Heart right ventricle (tissue), 16 donors: ENCODE measurements at regions of chr2 and their contacts with region 1.

Region 1: DNA sequence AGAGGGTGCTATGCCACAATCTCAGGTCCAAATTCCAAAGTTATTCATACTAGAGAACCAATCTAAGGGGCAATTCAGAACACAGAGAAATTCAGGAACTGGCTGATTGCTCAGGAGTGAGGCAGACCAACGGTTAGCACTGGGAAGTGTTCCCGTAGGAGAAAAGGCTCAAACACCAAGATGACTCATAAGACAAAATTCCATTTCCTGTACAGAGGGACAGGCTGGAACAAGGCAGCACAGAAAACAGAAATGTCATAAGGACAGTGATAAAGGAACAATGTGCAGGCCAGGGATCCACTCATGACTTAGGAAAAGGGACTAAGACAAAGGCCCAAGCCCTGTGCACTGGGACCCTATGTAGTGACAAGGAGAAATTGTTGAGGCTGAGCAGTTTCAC is 54.2 kb downstream of the PDE1A start:
- DNase-seq: peak in 1 of 2 donors; percentile 39
- ATAC-seq: peak; percentile 78 to 98 (median 91)
- H3K4me3 ChIP-seq: no peak overlapping the region
- H3K27ac ChIP-seq: peak overlapping the region; percentile 44 to 81 (median 72)
- H3K4me1 ChIP-seq: peaks cover 0 to 48% (median 25%) of the 10 kb centered on the region in 9 donors
- H3K27me3 ChIP-seq: no peaks in the 10 kb centered on the region
- CTCF ChIP-seq: no peak

Region 2: DNA sequence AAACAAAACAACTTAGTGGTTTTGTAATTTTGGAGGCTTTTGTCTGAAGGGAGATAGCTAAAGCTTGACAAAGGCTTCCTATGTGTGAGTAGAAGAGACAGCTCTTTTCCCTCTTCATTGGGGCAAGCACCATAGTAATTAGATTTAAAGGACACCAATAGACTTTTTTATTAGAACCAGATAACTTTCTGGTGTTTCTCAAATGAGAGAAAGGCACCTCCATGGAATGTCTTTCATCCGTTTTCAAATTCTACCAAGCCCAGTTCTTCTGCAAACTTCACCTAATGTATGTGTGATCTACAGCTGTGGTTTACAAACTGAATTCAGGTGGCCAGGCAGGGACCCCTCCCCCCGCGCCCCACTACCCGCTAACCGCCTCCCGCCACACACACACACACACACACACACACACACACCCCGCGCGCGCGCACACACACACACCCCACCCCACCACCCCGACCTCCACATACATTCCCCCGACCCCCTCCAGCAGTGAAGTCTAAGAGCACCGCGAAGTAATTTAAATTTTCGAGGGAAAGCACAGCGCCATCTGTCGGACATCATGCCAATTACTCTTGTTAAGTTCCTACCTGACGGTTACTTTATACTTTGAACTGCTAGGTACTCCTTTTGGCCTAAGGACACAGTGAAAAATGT is 418.7 kb before region 1 on chr2:
- intact Hi-C with region 1: no loop called
- DNase-seq: peak; percentile 15 to 57
- ATAC-seq: peak in 6 of 8 donors; percentile 47 to 63 (median 54)
- H3K4me3 ChIP-seq: peak overlapping the region in 4 of 10 donors; percentile 3 to 28 (median 22)
- H3K27ac ChIP-seq: no peak overlapping the region
- H3K4me1 ChIP-seq: peaks cover 0 to 11% (median 4%) of the 10 kb centered on the region in 9 donors
- H3K27me3 ChIP-seq: no peaks in the 10 kb centered on the region
- CTCF ChIP-seq: peak in 8 of 9 donors; percentile 38 to 69 (median 60)

Region 3: GRCh38 chr2:182240862-182241371 is 131.7 kb before region 1 on chr2:
- intact Hi-C with region 1: loop called in 1 of 10 experiments (anchors 10 kb)
- DNase-seq: no peak
- ATAC-seq: peak; percentile 43 to 75 (median 66)
- H3K4me3 ChIP-seq: no peak overlapping the region
- H3K27ac ChIP-seq: peak overlapping the region in 2 of 10 donors; percentile 49 to 50
- H3K4me1 ChIP-seq: peaks cover 0 to 22% (median 9%) of the 10 kb centered on the region in 9 donors
- H3K27me3 ChIP-seq: no peaks in the 10 kb centered on the region
- CTCF ChIP-seq: peak in 6 of 9 donors; percentile 32 to 53 (median 48)

Region 4: DNA sequence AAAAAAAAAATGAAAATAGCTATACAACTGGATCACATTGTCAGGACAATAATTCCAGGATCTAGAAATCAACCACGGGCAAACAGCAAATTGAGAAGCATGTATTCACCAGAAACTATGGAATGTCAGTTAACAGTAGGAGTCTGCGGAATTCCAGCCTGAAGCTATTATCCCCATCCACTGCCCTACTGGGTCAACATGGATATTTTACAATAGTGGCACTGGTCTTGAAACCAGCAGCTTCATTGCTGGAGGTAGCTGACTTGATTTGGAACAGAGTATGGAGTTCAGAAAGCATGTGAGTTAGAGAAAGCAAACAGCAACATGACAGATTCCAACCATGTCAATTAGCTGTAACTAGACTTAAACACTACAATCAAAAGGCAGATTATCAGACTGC is 109.8 kb after region 1 on chr2:
- intact Hi-C with region 1: no loop called
- DNase-seq: no peak
- ATAC-seq: no peak
- H3K4me3 ChIP-seq: no peak overlapping the region
- H3K27ac ChIP-seq: no peak overlapping the region
- H3K4me1 ChIP-seq: no peaks in the 10 kb centered on the region
- H3K27me3 ChIP-seq: no peaks in the 10 kb centered on the region
- CTCF ChIP-seq: no peak